Naive thymus-derived CD4-positive, alpha-beta T cell (primary cell): ENCODE measurements at regions of chr14 and their contacts with region 1.

Region 1: DNA sequence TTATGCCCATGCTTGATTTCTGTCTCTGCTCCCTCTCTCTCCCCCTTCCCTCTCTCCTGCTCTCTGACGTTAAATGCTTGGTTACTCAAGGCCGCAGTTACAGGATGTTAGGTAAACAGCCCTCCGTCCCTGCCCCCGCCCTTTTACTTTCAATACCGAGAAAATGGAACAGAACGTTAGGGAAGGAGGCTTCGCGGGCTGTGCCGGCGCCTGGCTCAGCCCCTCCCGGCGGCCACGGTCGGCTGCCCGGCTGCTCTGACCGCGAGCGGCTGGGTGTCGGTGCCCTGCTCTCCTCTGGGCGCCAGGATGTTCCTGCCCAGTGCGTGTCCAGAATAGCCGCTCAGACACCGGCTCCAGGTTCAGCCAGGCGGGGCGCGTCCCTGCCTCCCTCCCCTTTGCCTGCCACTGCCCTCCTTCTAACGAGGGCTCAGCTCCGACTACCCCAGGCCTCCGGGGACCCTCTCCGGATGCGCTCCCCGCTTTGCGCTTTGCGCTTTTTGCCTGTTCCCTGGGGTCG is 166.1 kb downstream of the ADCK1 start:
- DNase-seq: peak in 1 of 9 donors; percentile 34
- ATAC-seq: peak; percentile 6
- H3K4me3 ChIP-seq: no peak overlapping the region
- H3K4me3 Mint-ChIP-seq: peak overlapping the region in 2 of 10 donors; percentile 14 to 84
- H3K27ac ChIP-seq: no peak overlapping the region
- H3K27ac Mint-ChIP-seq: peak overlapping the region in 1 of 9 donors; percentile 90
- H3K4me1 ChIP-seq: no peaks in the 10 kb centered on the region
- H3K4me1 Mint-ChIP-seq: peaks cover 0 to 3% (median 0%) of the 10 kb centered on the region in 7 donors
- H3K27me3 ChIP-seq: peaks cover 0 to 4% of the 10 kb centered on the region in 2 donors
- H3K27me3 Mint-ChIP-seq: peaks cover 10 to 55% (median 51%) of the 10 kb centered on the region in 5 donors

Region 2: GRCh38 chr14:78005325-78005724 is 39.3 kb after region 1 on chr14:
- CTCF ChIA-PET with region 1: no interaction called
- POLR2A ChIA-PET with region 1: no interaction called
- intact Hi-C with region 1: loop called in 1 of 2 experiments (anchors 1 kb)
- DNase-seq: peak in 1 of 9 donors; percentile 25
- ATAC-seq: peak; percentile 60
- H3K4me3 ChIP-seq: no peak overlapping the region
- H3K4me3 Mint-ChIP-seq: no peak overlapping the region
- H3K27ac ChIP-seq: no peak overlapping the region
- H3K27ac Mint-ChIP-seq: peak overlapping the region in 1 of 9 donors; percentile 39
- H3K4me1 ChIP-seq: no peaks in the 10 kb centered on the region
- H3K4me1 Mint-ChIP-seq: peaks cover 0 to 17% (median 0%) of the 10 kb centered on the region in 7 donors
- H3K27me3 ChIP-seq: no peaks in the 10 kb centered on the region
- H3K27me3 Mint-ChIP-seq: peaks cover 13 to 32% (median 17%) of the 10 kb centered on the region in 5 donors